ENCODE measurements at regions of chr5 and their contacts with region 1.

Region 1: GRCh38 chr5:134873987-134874830 is at the start of gene TXNDC15:
- DNase-seq: peak; percentile 97
- ATAC-seq: peak; percentile 96
- total RNA-seq, gene TXNDC15: 52.8 TPM

Region 2: DNA sequence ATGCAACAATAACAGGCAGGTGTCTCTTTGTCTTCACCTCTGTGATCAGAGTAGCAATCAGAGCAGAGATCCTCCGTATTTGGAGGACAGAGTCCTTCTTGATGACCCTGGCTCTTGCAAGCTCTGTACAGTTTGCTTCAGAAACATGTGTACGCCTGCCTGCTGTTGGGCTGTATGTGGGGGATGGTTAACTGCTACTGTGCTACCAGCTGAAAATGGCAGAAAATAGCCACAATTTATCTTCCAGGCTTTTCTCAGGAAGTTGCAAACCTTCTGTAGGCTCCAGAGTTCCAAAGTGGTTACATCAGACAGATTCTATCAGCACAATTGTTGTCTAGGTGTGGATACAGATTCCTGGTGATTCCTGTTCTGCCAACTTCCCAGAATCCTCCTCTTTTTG is 80.1 kb before region 1 on chr5:
- intact Hi-C with region 1: no loop called
- DNase-seq: no peak
- ATAC-seq: no peak

Region 3: DNA sequence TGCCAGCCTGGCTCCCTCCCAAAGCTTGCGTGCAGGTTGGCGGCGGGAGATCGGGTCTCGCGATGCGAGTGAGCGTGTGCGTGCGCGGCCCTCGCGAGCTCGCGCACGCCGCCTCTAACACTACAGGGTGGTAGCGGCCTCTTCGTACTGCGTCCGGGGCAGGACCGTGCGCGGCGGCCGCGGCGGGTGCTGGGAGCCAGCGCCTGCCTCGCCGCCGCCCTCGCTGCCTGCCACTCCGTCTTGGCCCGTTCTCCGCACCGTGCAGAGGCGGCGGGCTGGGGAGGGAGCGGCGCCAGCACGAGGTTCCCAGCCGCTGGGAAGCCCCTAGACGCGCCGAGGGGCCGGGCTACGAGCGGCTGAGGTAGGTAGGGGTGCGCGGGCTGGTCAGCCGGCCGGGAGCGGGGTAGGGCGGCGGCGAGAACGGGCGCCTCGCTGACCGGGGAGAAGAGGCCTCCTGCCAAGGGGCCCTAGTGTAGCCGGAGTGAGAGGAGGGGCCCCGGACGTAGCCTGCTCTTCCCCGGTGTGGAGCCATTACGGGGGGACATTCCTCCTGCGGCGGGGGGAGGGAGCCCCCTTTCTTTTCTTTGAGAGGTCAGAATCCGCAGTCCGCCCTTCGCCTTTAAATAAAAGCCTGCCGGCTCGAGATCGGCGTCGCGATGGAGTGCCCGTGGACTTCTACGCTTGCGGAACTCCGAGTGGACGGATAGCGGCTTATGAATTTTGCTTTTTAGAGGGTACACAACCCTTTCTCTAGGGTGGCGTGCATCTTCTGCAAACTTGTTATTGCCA is 28.2 kb before region 1 on chr5 and contains the start of gene C5orf24:
- intact Hi-C with region 1: loop called (anchors 2 kb)
- DNase-seq: peak; percentile 98
- ATAC-seq: peak; percentile 99
- total RNA-seq, gene C5orf24: 21.9 TPM